HEK293 (cell line): ENCODE measurements at regions of chr10 and their contacts with region 1.

Region 1: GRCh38 chr10:96017191-96017687 is 26.1 kb upstream of the CCNJ start:
- H3K4me3 ChIP-seq: no peak overlapping the region
- H3K27ac ChIP-seq: no peak overlapping the region
- H3K4me1 ChIP-seq: no peaks in the 10 kb centered on the region
- CTCF ChIP-seq: no peak

Region 2: DNA sequence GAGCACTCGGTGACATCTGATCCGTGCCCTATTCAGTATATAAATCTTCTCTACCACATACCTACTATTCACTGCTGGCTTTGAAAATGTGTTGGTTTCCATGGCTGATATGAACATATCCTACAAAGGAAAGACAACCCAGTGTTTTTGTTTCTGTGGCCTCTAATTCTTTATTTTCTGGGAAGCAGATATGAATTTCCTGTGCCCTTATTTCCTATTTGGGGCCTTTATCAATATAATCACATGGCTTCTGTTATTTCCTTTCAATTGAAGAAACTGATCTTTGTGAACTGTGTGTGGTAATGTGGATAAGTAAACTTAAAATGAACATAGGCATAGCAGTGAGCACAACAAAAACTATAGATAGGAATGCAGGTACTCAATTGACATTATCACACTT is 36.7 kb after region 1 on chr10:
- CTCF ChIA-PET with region 1: interaction called, 10 read pairs
- POLR2A ChIA-PET with region 1: no interaction called
- H3K4me3 ChIP-seq: no peak overlapping the region
- H3K27ac ChIP-seq: no peak overlapping the region
- H3K4me1 ChIP-seq: no peaks in the 10 kb centered on the region
- CTCF ChIP-seq: no peak

Region 3: DNA sequence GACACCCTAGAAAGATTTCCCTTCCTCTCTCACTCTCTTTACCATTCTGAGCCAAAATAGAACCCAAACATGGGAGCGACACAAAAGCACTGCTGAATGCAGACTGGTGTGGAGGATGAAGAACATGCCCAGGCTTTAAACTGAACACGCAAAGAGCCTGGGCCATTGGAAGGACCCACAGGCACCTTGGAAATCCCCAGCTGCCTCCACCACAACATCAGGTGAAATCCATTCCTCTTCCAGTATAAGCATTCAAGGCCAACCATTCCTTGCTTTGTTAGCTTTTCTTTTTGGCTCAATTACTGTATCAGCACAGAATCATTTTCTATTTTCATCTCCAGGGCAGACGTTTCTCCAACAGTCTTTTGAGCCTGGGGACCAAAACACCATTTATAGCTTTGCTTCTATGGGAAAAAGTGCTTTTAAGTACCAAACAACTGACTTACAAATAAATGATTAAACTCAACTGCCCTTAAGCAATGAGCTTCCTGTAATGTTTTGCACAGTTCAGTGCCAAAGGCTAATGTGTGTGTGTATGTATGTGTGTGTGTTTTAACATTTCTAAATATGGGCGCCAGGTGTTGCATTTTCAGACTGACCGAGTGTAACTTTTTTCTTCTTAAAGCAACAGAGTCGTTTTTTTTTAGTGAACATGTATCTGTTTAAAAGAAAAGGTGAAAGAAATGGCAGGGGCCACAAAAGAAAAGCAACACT is 270.3 kb after region 1 on chr10:
- CTCF ChIA-PET with region 1: interaction called, 96 read pairs
- POLR2A ChIA-PET with region 1: no interaction called
- H3K4me3 ChIP-seq: no peak overlapping the region
- H3K27ac ChIP-seq: no peak overlapping the region
- H3K4me1 ChIP-seq: no peaks in the 10 kb centered on the region; the same call in 1 of the 2 replicates
- CTCF ChIP-seq: no peak

Region 4: GRCh38 chr10:96292971-96293920 is 276.0 kb after region 1 on chr10:
- CTCF ChIA-PET with region 1: interaction called, 96 read pairs
- POLR2A ChIA-PET with region 1: no interaction called
- H3K4me3 ChIP-seq: no peak overlapping the region
- H3K27ac ChIP-seq: no peak overlapping the region
- H3K4me1 ChIP-seq: no peaks in the 10 kb centered on the region
- CTCF ChIP-seq: 0 out of 2 replicates have a peak, but pooled peaks have one; percentile 18

Region 5: DNA sequence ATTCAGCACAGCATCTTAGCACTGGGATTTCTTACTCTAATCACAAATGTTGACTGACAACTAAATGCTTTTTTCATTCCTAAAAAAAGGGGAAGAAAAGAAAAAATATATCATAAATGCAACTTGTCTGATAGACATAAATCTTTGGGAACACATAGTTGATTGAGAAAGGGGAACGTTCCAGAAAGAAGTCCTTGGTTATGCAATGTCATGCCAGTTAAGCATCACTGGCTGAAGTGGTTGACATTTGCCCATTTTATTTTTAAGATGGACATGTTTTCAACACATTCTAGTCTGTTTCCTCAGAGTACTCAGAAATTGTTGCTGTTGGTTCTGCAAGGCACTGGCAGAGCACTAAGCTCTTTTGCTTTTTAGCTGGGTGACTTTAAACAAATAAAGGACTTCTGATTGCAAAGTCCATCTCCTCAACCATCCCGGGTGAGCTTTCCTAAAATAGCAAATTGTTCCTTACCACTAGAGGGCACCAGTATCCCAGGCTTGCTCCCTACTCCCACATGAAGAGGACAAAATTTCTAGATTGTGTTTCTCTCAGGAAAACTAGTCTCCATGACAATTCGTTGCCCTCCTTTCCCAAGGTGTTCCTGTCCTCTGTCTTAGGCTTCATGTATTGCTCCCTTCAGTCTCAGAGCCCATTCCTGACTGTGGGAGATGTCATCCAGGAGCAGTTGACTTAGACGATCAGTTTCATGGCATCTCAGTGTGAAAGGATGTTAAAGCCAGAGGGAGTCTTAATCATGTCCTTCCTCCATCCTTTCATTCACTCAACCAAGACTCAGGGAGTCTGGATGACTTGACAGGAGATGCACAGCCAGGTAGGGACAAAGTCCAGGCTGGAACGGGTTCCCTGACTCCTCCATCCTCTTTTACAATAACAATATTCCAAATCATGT is 317.6 kb after region 1 on chr10:
- CTCF ChIA-PET with region 1: interaction called, 31 read pairs
- POLR2A ChIA-PET with region 1: no interaction called
- H3K4me3 ChIP-seq: no peak overlapping the region
- H3K27ac ChIP-seq: no peak overlapping the region
- H3K4me1 ChIP-seq: no peaks in the 10 kb centered on the region
- CTCF ChIP-seq: peak; percentile 23; the same call in 1 of the 2 replicates

Region 6: DNA sequence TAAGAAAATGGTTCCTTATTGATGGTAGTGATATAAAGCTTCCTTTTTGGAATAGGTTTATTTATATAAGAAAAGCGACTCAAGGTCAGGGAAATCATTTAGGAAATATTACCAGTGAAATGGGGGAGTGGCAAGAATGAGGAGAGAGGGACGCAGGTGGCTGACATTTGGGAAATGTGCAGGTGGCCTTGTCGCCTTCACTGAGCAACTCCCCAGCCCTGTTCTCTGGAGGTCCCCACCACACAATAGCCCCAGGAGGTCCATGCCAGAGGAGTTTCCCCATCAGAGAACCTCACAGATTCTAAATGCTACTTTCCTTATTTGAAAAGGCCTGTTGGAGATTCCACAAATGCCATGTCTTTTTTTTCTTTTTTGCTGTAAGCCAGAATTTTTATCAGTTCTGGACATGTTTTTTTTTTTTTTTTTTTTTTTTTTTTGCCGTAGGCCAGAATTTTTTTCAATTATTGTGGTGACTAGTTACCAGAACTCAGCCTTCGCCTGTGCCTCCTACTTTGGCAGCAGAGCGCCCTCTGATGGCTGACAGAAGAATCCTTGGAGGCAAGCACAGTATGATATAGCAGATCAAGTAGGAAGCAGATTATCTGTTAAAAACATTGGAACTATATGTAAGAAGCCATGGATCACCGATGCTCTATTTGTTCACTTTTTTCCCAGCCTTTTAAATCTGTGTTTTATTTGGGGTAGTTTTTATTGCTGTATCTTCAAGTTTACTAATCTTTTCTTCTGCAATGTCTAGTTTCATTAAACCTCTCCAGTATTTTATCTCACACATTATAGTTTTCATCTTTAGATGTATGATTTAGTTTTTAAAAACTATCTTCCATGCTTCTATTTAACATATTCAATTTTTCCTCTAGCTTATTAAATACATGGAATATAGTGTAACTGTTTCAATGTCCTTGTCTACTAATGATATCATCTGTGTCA is 323.0 kb after region 1 on chr10:
- CTCF ChIA-PET with region 1: interaction called, 31 read pairs
- POLR2A ChIA-PET with region 1: no interaction called
- H3K4me3 ChIP-seq: no peak overlapping the region
- H3K27ac ChIP-seq: no peak overlapping the region
- H3K4me1 ChIP-seq: no peaks in the 10 kb centered on the region
- CTCF ChIP-seq: peak; percentile 52; the same call in 1 of the 2 replicates